CD4-positive, alpha-beta memory T cell (primary cell): ENCODE measurements at regions of chr15 and their contacts with region 1.

Region 1: DNA sequence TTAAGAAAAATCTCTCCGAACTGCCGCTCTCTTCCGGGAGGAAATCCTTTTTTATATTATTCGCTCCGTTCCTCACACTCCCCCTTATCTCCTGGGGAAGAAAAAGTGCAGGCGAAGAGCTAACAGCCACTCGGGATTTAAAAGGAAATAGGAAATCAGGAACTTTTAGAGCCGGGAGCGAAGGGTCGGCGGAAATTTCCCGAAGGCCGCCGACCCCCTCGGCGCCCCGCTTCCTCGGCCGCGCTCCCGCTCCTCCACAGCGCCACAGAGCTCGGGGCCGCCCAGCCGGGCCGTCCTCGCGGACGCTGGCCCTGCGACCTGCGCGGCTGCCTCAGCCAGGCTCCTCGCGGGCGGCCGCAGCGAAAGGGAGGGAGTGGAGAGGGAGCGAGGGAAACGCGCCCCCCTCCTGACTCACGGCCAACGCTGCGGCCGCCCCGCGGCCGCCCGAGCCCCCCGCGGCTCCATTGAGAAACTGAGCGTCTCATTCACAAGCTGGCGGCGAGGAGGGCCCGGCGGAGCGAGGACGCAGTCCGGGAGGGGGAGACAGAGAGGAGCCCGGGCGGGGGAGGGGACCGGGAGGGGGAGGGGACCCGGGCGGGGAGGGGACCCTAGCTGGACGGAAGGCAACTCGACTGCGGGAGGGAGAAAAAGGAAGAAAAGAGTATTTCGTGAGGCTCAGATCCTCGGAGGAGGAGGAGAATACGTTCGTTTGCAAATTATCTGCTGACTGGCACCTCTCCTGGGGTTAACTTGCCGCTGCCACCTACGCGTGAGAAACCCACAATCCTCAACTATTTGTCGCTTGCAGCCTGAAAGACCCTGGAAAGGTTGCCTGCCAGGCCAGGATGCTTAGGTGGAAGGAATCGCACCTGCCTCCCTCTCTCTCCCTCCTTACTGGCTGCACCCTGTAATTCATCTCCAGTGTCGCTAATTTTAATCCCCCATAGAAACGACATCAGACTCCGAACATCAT is at the start of gene PTPN9:
- DNase-seq: peak; percentile 52 to 73 (median 63)
- H3K4me3 ChIP-seq: peak within 1 kb of the TSS; percentile 61 to 74
- H3K4me3 Mint-ChIP-seq: peak within 1 kb of the TSS; percentile 93 to 97 (median 94)
- H3K27ac ChIP-seq: peak within 1 kb of the TSS; percentile 77
- H3K27ac Mint-ChIP-seq: peak within 1 kb of the TSS; percentile 90 to 95 (median 94)
- H3K4me1 ChIP-seq: peaks cover 22% of the 10 kb centered on the region
- H3K4me1 Mint-ChIP-seq: peaks cover 18 to 26% (median 21%) of the 10 kb centered on the region in 4 donors
- H3K27me3 ChIP-seq: no peaks in the 10 kb centered on the region
- H3K27me3 Mint-ChIP-seq: no peaks in the 10 kb centered on the region
- total RNA-seq, gene PTPN9: 15.9 to 16.6 TPM

Region 2: DNA sequence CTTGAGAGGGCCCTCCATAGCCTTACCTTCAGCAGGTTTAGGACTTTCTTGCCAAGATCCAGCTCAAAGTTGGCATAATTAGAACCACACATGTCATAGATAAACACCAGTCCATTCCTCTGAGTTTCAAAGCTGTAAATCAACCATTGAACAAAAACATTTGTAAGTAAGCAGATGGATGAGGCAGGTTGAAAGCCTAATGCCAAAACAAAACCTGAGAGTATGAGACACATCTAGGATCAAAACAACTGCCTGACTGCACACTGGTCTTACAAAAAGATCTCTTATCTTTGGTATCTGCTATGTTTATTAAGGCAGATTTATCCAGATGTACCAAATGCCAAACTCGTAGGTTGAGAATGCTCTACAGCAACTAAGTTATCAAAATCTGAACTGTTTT is 62.0 kb before region 1 on chr15:
- CTCF ChIA-PET with region 1: interaction called, 3 read pairs
- POLR2A ChIA-PET with region 1: no interaction called
- intact Hi-C with region 1: loop called (anchors 10 kb)
- DNase-seq: no peak
- H3K4me3 ChIP-seq: no peak overlapping the region
- H3K4me3 Mint-ChIP-seq: no peak overlapping the region
- H3K27ac ChIP-seq: no peak overlapping the region
- H3K27ac Mint-ChIP-seq: peak overlapping the region in 1 of 7 donors; percentile 40
- H3K4me1 ChIP-seq: no peaks in the 10 kb centered on the region
- H3K4me1 Mint-ChIP-seq: no peaks in the 10 kb centered on the region
- H3K27me3 ChIP-seq: no peaks in the 10 kb centered on the region
- H3K27me3 Mint-ChIP-seq: no peaks in the 10 kb centered on the region

Region 3: DNA sequence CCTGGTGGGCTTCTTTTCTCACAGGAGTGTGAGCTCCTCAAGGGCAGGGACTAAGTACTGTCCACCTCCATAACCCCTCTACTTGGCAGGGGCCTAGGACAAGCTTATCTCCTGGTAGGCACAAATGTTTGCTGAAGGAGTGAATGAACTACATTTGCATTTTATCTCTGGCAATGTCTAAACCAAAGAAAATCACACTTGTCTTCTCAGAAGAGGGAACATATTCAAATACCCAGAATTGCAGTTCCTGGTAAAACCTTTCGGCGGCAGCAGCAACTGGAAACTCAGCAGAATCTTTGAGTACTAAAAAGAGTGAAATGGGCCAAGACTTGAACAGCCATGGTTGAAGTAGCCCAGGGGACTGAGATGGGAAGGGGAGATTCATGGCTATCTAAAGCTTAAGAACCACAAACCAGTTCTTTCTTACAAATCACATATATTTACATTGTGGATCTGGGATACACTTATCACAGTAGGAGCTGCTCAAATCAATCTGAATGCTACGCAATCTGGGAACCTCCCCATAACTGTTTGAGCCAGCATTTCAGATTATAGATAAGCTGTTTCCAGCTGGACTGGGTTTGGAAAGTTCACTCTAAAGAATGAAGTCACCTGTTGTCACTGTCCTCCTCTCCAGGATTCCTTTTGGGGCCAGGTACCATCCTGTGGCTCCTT is 18.6 kb after region 1 on chr15:
- CTCF ChIA-PET with region 1: interaction called, 11 read pairs
- POLR2A ChIA-PET with region 1: interaction called, 4 read pairs
- intact Hi-C with region 1: no loop called
- DNase-seq: peak; percentile 19 to 50 (median 33)
- H3K4me3 ChIP-seq: no peak overlapping the region
- H3K4me3 Mint-ChIP-seq: peak overlapping the region in 6 of 8 donors; percentile 1 to 68 (median 36)
- H3K27ac ChIP-seq: no peak overlapping the region
- H3K27ac Mint-ChIP-seq: peak overlapping the region in 6 of 7 donors; percentile 15 to 93 (median 59)
- H3K4me1 ChIP-seq: peaks cover 25% of the 10 kb centered on the region
- H3K4me1 Mint-ChIP-seq: peaks cover 16 to 26% (median 21%) of the 10 kb centered on the region in 4 donors
- H3K27me3 ChIP-seq: no peaks in the 10 kb centered on the region
- H3K27me3 Mint-ChIP-seq: no peaks in the 10 kb centered on the region

Region 4: GRCh38 chr15:75606711-75607699 is 27.8 kb after region 1 on chr15:
- CTCF ChIA-PET with region 1: interaction called, 6 read pairs
- POLR2A ChIA-PET with region 1: interaction called, 38 read pairs
- intact Hi-C with region 1: no loop called
- DNase-seq: peak; percentile 43 to 57 (median 52)
- H3K4me3 ChIP-seq: peak overlapping the region; percentile 5 to 40
- H3K4me3 Mint-ChIP-seq: peak overlapping the region; percentile 71 to 82 (median 78)
- H3K27ac ChIP-seq: peak overlapping the region; percentile 39
- H3K27ac Mint-ChIP-seq: peak overlapping the region; percentile 78 to 94 (median 91)
- H3K4me1 ChIP-seq: peaks cover 47% of the 10 kb centered on the region
- H3K4me1 Mint-ChIP-seq: peaks cover 34 to 56% (median 46%) of the 10 kb centered on the region in 4 donors
- H3K27me3 ChIP-seq: no peaks in the 10 kb centered on the region
- H3K27me3 Mint-ChIP-seq: no peaks in the 10 kb centered on the region